Heart left ventricle (tissue), 16 donors: ENCODE measurements at regions of chr18 and their contacts with region 1.

Region 1: DNA sequence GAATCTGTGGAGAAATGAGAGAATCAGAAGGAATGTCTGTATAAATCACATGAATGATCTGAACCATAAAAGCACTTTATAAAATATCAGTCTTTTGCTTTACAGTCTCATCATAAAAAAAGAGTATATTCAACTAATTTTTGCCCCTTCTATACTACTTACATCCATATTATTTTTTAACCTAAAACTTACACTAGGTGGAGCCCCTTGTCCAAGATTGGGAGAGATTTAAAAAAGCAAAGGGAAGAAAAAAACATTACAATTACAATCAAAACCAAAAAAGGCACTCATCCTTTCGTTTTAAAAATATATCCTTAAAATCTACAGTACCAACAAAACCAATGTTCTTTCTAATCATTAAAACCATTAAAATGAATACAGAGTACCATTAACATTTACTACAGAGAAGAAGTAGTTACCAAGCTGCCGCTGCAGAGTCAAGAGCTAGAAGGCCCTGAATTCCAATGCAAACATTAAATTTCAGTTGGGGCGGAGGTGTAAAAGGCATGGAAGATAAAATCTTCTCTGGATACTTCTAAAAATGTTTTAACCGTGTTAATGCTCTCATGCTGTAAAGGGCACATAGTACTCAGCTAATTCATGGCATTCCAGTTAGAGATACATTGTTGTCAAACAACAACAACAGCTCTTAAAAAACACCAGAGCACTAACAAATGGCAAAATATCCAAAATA is 56.7 kb upstream of the EPB41L3 start:
- DNase-seq: no peak
- ATAC-seq: no peak
- H3K4me3 ChIP-seq: no peak overlapping the region
- H3K27ac ChIP-seq: no peak overlapping the region
- H3K4me1 ChIP-seq: peaks cover 0 to 4% (median 0%) of the 10 kb centered on the region in 12 donors
- H3K27me3 ChIP-seq: no peaks in the 10 kb centered on the region
- CTCF ChIP-seq: peak in 8 of 12 donors; percentile 19 to 56 (median 48)
- POLR2A ChIP-seq: no peak

Region 2: DNA sequence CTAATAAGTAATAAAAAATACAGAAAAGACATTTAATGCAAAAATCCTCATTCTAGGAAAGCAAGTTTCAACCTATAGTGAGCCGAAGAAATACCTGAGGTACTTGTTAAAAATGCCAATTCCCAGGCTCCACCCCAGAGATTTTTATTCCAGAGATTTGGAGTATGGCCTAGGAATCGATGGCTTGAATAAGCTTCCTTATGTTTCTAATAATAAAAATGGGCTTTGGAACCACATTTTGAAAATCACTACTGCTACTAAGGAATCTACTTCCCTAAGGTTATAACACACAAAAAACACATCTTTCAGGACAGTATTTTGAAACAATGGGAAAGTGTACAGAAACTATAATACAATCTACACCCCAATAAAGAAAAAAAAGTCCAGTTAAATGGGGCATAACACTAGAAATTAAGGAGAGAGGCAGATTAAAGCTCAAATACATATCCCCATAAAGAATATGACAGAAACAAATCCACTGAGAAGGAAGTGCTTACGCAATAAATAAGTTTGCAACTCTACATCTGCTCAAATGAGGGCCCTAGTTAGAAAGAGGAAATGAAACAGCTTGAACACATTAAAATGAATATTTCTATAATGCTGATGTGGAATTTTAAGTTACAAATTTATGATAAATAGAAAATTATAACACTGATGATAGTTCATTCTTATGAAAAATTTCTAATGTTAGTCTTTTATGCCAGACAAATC is 160.4 kb before region 1 on chr18:
- intact Hi-C with region 1: no loop called
- DNase-seq: no peak
- ATAC-seq: peak in 1 of 4 donors; percentile 56
- H3K4me3 ChIP-seq: no peak overlapping the region
- H3K27ac ChIP-seq: peak overlapping the region in 3 of 12 donors; percentile 5 to 75 (median 20)
- H3K4me1 ChIP-seq: peaks cover 0 to 29% (median 0%) of the 10 kb centered on the region in 12 donors
- H3K27me3 ChIP-seq: no peaks in the 10 kb centered on the region
- CTCF ChIP-seq: no peak
- POLR2A ChIP-seq: no peak

Region 3: DNA sequence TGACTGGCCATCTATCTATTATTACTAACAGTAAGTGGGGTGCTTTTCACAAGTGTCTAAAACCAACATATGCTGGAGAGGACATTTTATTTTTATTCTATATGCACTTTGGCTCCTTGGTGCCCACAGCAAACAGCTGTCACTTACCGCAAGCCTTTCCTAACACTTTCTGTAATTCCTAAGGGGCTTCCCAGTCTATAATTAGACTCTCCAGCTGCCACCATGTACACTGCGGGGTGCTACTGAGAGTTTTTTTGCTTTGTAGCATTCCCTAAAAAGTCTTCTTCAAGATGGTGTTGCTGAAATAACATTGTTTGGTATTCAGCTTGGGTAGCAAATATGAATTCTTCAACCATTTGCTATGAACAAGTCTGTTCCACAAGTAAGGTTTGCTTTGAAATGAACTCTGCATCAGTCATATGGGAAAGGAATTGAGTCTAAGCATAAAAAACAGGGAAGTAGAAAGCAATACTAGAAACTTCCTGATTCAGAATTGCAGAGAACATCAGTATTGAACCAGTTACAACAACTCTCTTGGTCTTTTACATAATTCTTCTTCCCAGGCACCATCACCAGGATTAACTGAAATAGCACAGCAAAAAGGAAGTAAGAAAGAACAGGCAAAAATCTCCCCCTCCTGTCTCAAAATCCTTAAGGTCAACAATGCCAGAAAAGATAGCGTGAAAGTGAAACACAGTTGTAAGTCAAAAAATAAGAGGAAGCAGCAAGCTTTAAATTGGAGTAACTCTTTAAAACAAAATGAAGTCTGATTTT is 85.3 kb before region 1 on chr18:
- intact Hi-C with region 1: no loop called
- DNase-seq: no peak
- ATAC-seq: peak in 2 of 4 donors; percentile 54 to 62
- H3K4me3 ChIP-seq: peak overlapping the region in 1 of 12 donors; percentile 9
- H3K27ac ChIP-seq: peak overlapping the region in 6 of 12 donors; percentile 1 to 89 (median 38)
- H3K4me1 ChIP-seq: peaks cover 0 to 69% (median 0%) of the 10 kb centered on the region in 12 donors
- H3K27me3 ChIP-seq: no peaks in the 10 kb centered on the region
- CTCF ChIP-seq: no peak
- POLR2A ChIP-seq: no peak

Region 4: DNA sequence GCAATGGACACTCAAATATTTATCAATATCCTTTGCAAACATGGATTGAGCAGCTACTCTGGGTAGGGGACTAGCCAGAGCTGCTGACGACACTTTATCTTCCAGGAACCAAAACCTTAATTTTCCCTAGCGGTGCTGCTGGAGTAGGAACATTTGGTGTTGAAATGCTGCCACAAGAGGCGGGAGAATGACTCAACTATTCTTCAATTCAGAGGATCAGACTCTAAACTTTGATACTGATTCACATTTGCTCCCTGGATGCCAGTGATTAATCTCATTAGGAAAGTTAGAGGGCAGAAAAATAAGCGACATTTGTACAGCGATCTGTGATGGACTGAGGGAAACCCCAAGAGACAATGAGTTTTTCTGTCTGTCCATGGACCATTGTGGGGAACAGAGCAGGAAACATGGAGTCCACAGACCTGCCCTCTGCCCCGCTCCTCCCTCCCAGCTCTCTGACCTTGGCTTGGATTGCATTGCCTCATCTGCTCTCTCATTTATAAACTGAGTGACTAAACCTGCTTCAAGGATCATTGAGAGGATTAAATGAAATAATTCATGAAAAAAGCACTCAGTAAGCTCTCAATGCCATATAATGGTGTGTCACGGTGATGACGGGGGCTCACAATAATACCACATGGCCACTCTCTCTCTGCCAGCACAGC is 44.1 kb before region 1 on chr18:
- intact Hi-C with region 1: no loop called
- DNase-seq: peak in 3 of 5 donors; percentile 23 to 45 (median 44)
- ATAC-seq: peak; percentile 42 to 90 (median 59)
- H3K4me3 ChIP-seq: no peak overlapping the region
- H3K27ac ChIP-seq: peak overlapping the region in 2 of 12 donors; percentile 16 to 33
- H3K4me1 ChIP-seq: peaks cover 0 to 5% (median 0%) of the 10 kb centered on the region in 12 donors
- H3K27me3 ChIP-seq: no peaks in the 10 kb centered on the region
- CTCF ChIP-seq: peak in 1 of 12 donors; percentile 5
- POLR2A ChIP-seq: no peak

Region 5: DNA sequence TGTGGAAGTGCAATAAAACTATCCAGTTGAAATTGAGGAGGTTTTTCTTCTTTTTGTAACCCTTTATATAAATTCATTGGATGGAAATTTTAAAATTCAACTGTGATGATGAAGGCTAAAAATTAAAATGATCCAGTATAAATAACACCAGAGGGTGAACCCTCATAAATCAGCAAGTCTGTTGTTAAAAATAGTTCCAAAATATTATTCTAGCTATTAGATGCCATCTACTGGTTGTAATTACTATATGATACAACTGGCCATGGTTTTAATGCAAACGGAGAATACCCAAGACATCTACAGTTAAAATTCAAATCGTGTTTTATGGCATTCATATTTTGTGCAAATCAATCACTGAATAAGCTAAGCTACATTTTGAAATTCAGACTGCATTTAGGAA is 241.0 kb after region 1 on chr18:
- intact Hi-C with region 1: loop called in 6 of 10 experiments (anchors 5 to 10 kb)
- DNase-seq: no peak
- ATAC-seq: no peak
- H3K4me3 ChIP-seq: no peak overlapping the region
- H3K27ac ChIP-seq: no peak overlapping the region
- H3K4me1 ChIP-seq: no peaks in the 10 kb centered on the region
- H3K27me3 ChIP-seq: peaks cover 0 to 13% (median 0%) of the 10 kb centered on the region in 9 donors
- CTCF ChIP-seq: peak in 5 of 12 donors; percentile 10 to 34 (median 19)
- POLR2A ChIP-seq: no peak

Region 6: GRCh38 chr18:6096730-6097129 is 496.2 kb after region 1 on chr18:
- intact Hi-C with region 1: loop called in 1 of 10 experiments (anchors 10 kb)
- DNase-seq: no peak
- ATAC-seq: no peak
- H3K4me3 ChIP-seq: no peak overlapping the region
- H3K27ac ChIP-seq: no peak overlapping the region
- H3K4me1 ChIP-seq: no peaks in the 10 kb centered on the region
- H3K27me3 ChIP-seq: no peaks in the 10 kb centered on the region
- CTCF ChIP-seq: no peak
- POLR2A ChIP-seq: no peak